GM10248 (cell line): ENCODE measurements at regions of chr2 and their contacts with region 1.

Region 1: GRCh38 chr2:226799181-226799975 is at the start of gene IRS1:
- DNase-seq: peak; percentile 67
- CTCF ChIP-seq: peak; percentile 59

Region 2: DNA sequence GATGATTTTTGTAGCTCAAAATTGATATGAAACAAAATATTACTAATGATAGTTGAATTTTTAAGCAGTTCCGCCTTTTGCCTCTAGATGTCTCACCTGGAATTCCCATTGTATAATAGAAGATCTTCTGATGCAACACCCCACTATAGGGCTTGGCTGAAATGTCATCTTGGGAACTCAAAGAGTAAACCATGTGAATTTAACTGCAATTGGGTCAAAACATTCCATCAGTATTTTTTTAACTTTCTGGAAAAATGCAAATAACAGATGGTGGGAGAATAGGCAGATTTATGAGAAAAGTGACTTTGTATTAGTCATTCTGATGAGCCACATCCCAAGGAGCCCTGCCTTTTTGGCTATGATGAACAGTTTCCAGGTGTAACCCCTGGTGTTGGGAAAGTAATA is 909.9 kb before region 1 on chr2:
- CTCF ChIA-PET with region 1: interaction called, 58 read pairs
- POLR2A ChIA-PET with region 1: no interaction called
- DNase-seq: peak; percentile 24
- CTCF ChIP-seq: peak; percentile 57

Region 3: GRCh38 chr2:226631671-226632070 is 167.7 kb before region 1 on chr2:
- CTCF ChIA-PET with region 1: no interaction called
- POLR2A ChIA-PET with region 1: no interaction called
- DNase-seq: no peak
- CTCF ChIP-seq: no peak

Region 4: DNA sequence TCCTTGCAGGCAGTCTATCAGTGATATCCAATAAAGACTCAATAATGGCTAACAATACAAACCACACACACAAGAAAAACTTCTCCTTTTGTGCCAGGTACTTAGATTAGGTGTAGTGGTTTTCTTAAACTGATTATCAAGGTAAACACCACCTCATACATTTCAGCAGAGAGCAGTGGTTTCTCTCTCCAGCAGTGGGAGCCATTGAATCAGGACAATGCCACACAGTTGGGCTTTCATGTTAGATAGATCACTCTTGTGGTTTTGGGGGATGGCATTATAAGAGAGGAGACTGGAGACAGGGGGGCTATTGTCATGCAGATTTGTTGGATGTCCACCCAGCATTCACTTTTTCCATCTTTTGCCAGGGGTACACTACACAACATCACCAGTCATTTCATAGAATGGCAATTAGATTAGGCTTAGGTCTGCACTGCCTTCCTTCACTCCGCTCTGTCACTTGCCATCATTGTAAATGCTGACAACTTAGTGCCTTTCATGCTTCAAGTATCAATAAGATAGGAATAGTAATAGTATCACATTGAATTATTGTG is 13.8 kb after region 1 on chr2:
- CTCF ChIA-PET with region 1: interaction called, 22 read pairs
- POLR2A ChIA-PET with region 1: no interaction called
- DNase-seq: no peak
- CTCF ChIP-seq: peak; percentile 53

Region 5: GRCh38 chr2:226828191-226828590 is 28.8 kb after region 1 on chr2:
- CTCF ChIA-PET with region 1: interaction called, 31 read pairs
- POLR2A ChIA-PET with region 1: no interaction called
- DNase-seq: no peak
- CTCF ChIP-seq: no peak

Region 6: DNA sequence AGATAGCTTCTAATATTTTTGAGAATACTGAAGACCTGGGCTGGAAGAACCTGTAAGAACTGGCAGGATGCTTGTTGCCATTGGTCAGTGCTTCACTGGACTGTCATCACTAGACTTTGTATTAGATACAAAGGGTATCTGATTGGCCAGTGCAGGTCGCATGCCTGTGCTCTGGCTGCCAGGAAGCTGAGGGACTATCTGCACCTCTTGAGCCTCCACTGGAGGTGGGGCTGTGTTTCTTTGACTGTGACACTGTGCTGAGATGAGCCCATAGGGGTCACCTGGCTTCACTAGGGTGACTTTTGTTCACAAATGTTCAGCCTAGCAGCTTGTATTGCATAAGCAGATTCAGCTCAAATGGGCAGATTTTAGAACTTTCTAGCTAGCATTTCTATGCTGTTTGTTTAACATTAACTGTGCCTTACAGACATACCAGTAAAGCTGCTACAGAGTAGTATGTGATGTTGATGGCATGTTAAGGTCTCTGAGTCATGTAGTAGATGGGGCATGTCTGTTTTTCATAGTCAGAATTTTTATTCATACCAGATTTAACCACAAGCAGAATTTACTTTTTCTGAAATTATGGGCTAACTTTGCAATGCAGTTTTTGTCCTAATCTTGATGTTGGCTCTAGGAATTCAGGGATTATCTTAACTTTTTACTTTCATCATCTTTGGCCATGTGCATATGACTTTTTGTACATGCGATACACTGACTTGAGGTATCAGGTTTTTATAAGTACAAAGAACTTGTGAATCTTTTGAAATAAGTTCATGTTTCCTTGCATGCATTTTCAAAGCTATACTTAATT is 92.6 kb after region 1 on chr2:
- CTCF ChIA-PET with region 1: interaction called, 13 read pairs
- POLR2A ChIA-PET with region 1: no interaction called
- DNase-seq: no peak
- CTCF ChIP-seq: no peak